A673 (cell line): ENCODE measurements at regions of chr17 and their contacts with region 1.

Region 1: DNA sequence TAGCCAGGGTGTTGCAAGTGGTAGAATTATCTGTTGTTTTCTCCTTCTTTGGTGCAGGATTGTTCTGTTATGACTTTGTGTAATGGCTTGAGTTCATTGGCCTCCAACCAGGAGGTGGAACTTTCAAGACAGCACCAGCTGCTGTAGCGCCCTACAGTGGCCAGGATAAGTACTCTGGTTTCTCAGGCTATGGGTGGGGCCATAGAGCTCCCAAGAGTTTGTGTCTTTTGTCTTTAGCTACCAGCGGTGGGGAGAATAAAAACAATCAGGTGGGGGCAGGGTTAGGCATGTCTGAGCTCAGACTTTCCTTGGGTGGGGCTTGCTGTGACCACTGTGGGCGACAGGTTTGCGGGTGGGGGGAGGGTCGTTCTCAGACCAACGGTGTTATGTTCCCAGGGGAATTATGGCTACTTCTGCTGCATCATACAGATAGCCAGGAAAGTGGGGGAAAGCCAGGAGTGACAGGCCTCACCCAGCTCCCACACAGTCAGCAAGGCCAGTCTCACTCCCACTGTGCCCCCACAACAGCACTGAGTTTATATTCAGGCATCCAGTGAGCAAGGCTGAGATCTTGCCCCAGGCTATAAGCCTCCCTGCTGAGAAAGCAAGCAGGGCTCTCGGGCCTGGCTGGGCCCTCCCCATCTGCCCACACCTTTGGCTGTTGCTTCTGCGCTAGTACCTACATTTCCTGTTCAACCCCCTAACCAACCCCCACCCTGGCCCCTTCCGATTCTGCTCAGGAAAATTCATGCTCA is 15.4 kb downstream of the ABCA10 start:
- DNase-seq: no peak
- H3K4me3 ChIP-seq: no peak overlapping the region
- H3K27ac ChIP-seq: no peak overlapping the region
- H3K4me1 ChIP-seq: no peaks in the 10 kb centered on the region
- H3K27me3 ChIP-seq: no peaks in the 10 kb centered on the region
- CTCF ChIP-seq: 0 out of 2 replicates have a peak, but pooled peaks have one; percentile 20

Region 2: DNA sequence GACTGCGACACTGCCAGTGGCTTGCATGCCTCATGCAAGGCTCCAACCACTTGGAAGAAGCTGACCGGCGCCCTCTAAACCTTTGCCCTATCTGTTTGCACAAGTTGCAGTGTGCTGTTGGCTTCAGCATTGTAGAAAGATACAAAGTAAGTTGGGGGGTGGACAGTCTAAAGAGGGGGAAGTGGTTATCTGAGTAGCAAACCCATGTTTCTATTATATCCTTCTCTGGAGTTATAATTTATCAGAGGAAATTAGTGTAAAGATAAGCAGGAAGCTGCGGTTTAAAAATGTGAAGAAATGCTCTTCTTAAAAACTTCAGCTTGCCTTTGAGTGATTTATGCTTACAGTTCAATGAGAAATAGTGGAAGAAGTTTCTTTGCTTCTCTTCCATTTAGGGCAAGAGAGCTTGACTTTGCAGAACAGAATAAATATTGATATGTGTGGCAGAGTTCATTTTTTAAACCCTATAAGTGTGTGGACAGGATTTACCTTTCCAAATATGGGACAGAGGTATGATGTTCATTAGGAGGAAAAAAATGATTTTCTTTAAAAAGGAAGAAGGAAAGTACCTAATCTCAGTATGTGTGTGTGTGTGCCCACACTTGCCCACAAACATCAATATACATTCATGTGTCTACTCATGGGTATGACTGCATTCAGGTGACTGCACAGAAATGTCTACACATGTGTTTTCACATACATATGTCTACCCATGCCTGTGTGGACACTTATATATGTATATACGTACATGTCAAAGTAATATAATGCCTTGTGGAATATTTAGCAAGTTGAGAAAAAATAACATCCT is 957.3 kb before region 1 on chr17:
- CTCF ChIA-PET with region 1: no interaction called
- POLR2A ChIA-PET with region 1: interaction called, 10 read pairs
- intact Hi-C with region 1: no loop called
- DNase-seq: no peak
- H3K4me3 ChIP-seq: no peak overlapping the region
- H3K27ac ChIP-seq: no peak overlapping the region
- H3K4me1 ChIP-seq: no peaks in the 10 kb centered on the region
- H3K27me3 ChIP-seq: no peaks in the 10 kb centered on the region
- CTCF ChIP-seq: no peak